ENCODE measurements at regions of chrX and their contacts with region 1.

Region 1: DNA sequence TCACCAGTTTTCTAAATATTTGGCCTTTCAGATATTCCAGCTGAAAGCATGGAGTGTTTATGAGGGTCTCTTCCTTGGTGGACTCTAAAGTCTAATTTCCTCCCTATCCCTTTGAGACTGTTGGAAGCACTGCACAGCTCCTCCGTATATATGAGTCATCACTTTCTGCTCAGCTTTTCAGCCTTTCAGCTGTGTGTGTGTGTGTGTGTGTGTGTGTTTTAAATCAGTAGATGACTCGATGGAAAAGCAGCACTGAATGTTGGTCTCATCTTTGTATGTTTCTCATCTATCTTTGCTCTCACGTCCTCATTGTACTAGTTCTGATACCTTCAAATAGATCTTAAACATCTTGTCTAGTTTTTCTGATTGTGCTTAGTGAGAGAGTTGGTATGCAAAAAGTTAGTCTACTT is 81.6 kb downstream of the ZFX start:
- DNase-seq: no peak
- H3K4me3 ChIP-seq: no peak overlapping the region
- H3K27ac ChIP-seq: no peak overlapping the region
- H3K4me1 ChIP-seq: no peaks in the 10 kb centered on the region
- H3K27me3 ChIP-seq: no peaks in the 10 kb centered on the region
- CTCF ChIP-seq: no peak
- POLR2A ChIP-seq: no peak

Region 2: DNA sequence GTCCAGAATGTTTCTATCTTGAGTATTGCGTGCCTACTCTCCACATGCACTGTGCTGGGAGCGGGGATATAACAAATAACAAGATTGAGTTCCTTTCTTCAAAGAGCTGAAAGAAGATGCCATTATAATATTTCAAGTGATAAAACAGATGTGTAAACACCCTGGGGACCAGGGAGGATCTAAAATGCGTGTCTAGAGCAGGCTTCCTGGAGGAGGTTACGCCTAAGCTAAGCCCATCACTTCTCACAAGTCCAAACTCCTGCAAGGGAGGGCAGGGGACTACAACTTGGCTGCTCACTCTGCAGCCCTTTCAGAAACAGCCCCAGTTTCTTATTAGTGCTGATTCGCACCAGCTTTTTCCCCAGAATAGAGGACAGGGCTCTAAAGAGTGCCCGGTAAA is 874.9 kb before region 1 on chrX:
- intact Hi-C with region 1: loop called (anchors 10 kb)
- DNase-seq: no peak
- H3K4me3 ChIP-seq: no peak overlapping the region
- H3K27ac ChIP-seq: no peak overlapping the region
- H3K4me1 ChIP-seq: no peaks in the 10 kb centered on the region
- H3K27me3 ChIP-seq: no peaks in the 10 kb centered on the region
- CTCF ChIP-seq: no peak
- POLR2A ChIP-seq: no peak

Measured in breast epithelium (tissue), 4 donors.